WTC11 (cell line): ENCODE measurements at regions of chr6 and their contacts with region 1.

Region 1: GRCh38 chr6:41406728-41407489 is 71.5 kb downstream of the NCR2 start:
- DNase-seq: peak; percentile 55
- ATAC-seq: peak; percentile 49
- H3K4me3 Mint-ChIP-seq: peak overlapping the region; percentile 55
- H3K27ac Mint-ChIP-seq: no peak overlapping the region
- H3K4me1 Mint-ChIP-seq: peaks cover 34% of the 10 kb centered on the region
- H3K27me3 Mint-ChIP-seq: peaks cover 100% of the 10 kb centered on the region
- CTCF ChIP-seq: no peak

Region 2: GRCh38 chr6:41373919-41374617 is 32.8 kb before region 1 on chr6:
- CTCF ChIA-PET with region 1: interaction called, 15 read pairs
- POLR2A ChIA-PET with region 1: interaction called, 3 read pairs
- DNase-seq: peak; percentile 72
- ATAC-seq: peak; percentile 29
- H3K4me3 Mint-ChIP-seq: peak overlapping the region; percentile 65
- H3K27ac Mint-ChIP-seq: no peak overlapping the region
- H3K4me1 Mint-ChIP-seq: peaks cover 50% of the 10 kb centered on the region
- H3K27me3 Mint-ChIP-seq: peaks cover 99% of the 10 kb centered on the region
- CTCF ChIP-seq: no peak

Region 3: GRCh38 chr6:41386594-41386993 is 20.3 kb before region 1 on chr6:
- CTCF ChIA-PET with region 1: no interaction called
- POLR2A ChIA-PET with region 1: interaction called, 10 read pairs
- DNase-seq: no peak
- ATAC-seq: no peak
- H3K4me3 Mint-ChIP-seq: no peak overlapping the region
- H3K27ac Mint-ChIP-seq: no peak overlapping the region
- H3K4me1 Mint-ChIP-seq: no peaks in the 10 kb centered on the region
- H3K27me3 Mint-ChIP-seq: peaks cover 38% of the 10 kb centered on the region
- CTCF ChIP-seq: no peak